Activated naive CD4-positive, alpha-beta T cell treated with anti-CD3 and anti-CD28 coated beads for 36 hours (primary cell): ENCODE measurements at regions of chr10 and their contacts with region 1.

Region 1: DNA sequence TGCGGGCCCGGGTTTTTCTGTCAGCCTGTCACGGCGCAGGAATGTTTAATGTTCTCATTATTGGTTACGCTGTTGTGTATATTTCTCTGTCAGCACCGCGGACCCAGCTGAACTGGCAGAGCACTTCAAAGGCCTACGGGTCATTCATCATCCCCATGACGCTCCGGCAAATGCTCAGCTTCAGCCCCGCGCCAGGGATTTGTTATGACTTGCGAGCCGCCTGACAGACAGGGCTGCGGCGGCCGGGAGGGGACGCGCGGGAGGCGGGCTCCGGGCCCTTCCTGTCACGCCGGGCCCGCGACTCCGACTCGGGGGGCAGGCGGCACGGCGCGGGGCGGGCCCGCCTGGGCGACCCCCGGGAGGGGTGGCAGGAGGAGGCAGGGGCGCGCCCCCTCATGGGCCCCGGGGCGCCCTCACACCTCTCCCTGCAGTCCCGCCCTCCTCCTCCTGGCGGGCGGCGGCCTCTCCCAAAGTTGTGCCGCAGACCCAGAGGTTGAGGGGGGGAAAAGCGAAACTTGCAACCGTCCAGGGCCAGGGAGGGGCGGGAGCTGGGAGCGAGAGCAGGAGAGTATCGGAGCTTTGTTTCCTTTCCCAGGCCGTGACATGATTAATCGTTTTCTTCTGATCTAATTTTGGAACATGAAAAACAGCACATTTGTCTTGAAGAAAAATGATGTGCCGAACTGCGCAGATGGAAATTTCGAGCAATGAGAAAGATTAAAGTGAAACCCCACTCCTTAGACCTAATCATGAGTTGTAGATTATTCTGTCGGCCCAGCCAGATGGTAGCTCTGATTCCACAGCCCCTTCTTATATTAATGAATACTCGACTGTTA is 59.3 kb upstream of the COMTD1 start:
- DNase-seq: peak; percentile 93
- H3K4me3 Mint-ChIP-seq: peak overlapping the region; percentile 57
- H3K27ac Mint-ChIP-seq: no peak overlapping the region
- H3K4me1 Mint-ChIP-seq: peaks cover 5% of the 10 kb centered on the region
- H3K27me3 Mint-ChIP-seq: peaks cover 4% of the 10 kb centered on the region

Region 2: DNA sequence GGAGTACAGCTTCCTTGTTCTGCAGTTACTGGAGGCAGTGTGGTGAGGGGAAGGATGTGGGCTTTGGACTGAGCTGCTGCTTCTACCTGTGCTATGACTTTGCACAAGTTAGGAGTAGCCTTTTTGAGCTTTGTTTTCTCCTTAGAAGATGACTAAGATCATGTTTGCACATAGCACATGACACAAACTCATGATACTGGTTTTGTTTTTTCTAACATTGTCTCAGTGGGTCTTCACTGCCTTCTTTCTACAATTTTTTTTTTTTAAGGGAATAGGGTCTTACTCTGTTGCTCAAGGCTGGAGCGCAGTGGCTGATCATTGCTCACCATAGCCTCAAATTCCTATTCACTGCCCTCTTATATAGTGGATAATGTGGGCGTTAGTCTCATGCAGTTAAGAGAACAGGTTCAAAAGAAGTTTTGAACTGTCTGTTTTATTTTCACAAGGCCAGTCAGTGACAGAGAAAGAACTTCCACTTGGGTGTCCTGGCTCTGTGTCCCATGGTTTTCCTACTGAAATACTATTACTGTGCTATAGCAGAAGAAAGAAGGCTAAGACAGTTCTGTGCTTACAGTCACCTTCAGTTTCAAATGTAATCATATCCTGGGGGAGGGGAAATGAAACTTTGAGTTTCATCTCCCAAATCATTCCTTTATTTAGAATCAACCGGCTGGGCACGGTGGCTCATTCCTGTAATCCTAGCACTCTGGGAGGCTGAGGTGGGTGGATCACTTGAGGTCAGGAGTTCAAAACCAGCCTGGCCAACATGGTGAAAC is 396.7 kb before region 1 on chr10:
- CTCF ChIA-PET with region 1: no interaction called
- intact Hi-C with region 1: loop called (anchors 5 kb)
- DNase-seq: peak; percentile 70
- H3K4me3 Mint-ChIP-seq: no peak overlapping the region
- H3K27ac Mint-ChIP-seq: peak overlapping the region; percentile 46
- H3K4me1 Mint-ChIP-seq: peaks cover 57% of the 10 kb centered on the region
- H3K27me3 Mint-ChIP-seq: no peaks in the 10 kb centered on the region

Region 3: DNA sequence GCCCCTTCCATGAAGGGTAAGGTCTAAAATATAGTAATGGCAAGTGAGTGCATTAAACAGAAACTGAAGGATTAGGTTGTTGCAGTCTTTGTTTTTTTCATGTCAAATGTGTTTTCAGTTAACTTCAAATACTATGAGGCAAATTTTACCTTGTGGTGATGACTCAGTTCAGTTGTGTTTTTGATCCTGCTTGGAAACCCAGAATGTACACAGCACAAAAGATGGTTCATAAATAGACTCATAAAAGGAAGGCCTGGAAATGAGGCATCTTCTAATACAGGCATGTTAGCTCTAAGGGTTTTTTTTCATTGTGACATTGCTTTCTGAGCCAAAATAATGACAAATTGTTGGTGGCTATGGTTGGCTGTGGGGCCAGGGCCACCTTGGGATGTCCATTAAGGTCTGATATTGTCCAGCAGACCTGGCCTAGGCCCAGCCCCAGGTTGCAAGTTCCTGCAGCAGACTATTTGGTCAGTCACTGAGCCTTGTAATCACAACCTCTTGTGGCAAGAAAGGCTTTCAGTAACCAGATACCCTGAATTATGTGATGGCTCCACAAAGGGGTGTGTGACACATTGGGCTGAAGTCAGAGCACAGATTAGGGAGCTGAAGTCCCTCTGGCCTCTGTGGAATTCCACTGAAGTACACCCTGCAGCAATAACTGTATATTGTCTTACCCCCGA is 252.7 kb before region 1 on chr10:
- CTCF ChIA-PET with region 1: no interaction called
- intact Hi-C with region 1: loop called (anchors 1 kb)
- DNase-seq: peak; percentile 30
- H3K4me3 Mint-ChIP-seq: peak overlapping the region; percentile 20
- H3K27ac Mint-ChIP-seq: peak overlapping the region; percentile 87
- H3K4me1 Mint-ChIP-seq: peaks cover 45% of the 10 kb centered on the region
- H3K27me3 Mint-ChIP-seq: peaks cover 7% of the 10 kb centered on the region

Region 4: DNA sequence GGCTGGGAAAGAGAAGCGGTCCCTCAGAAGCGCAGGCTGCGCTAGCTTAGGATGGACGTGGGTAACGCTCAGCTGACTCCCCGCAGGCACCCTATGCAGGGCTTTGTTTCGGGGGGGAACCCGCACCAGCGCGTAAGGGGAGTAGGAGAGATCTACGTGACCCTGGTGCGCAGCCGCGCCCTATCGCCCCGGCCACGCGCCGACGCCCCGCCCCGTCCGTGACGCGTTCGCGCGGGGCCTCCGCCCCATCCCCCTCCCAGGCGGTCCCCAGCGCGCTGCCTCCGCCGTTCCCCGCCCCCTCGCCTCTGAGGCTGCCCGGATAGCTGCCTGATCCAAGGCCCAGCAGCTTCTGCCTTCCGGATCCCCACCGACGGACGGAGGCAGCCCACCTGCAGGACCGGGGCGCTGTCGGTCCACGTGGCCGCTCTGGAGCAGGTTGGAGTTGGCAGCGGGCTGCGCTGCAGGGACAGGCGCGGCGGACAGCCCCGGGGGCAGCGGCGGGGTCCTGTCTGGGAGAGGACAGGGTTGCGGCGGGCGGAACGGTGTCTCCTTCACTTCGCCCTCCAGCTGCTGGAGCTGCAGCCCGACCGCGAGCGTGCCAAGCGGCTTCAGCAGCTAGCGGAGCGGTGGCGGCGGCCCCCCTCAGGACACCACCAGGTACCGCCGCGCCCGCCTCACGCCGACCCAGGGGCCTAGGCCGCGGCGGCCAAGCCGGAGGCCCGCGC is 84.6 kb before region 1 on chr10 and contains the start of gene VDAC2:
- CTCF ChIA-PET with region 1: no interaction called
- intact Hi-C with region 1: loop called (anchors 1 kb)
- DNase-seq: peak; percentile 92
- H3K4me3 Mint-ChIP-seq: peak within 1 kb of the TSS; percentile 100
- H3K27ac Mint-ChIP-seq: peak within 1 kb of the TSS; percentile 99
- H3K4me1 Mint-ChIP-seq: peaks cover 42% of the 10 kb centered on the region
- H3K27me3 Mint-ChIP-seq: no peaks in the 10 kb centered on the region
- total RNA-seq, gene VDAC2: 193 TPM

Region 5: GRCh38 chr10:75250910-75251309 is 44.2 kb before region 1 on chr10:
- CTCF ChIA-PET with region 1: no interaction called
- intact Hi-C with region 1: no loop called
- DNase-seq: no peak
- H3K4me3 Mint-ChIP-seq: no peak overlapping the region
- H3K27ac Mint-ChIP-seq: no peak overlapping the region
- H3K4me1 Mint-ChIP-seq: no peaks in the 10 kb centered on the region
- H3K27me3 Mint-ChIP-seq: no peaks in the 10 kb centered on the region

Region 6: DNA sequence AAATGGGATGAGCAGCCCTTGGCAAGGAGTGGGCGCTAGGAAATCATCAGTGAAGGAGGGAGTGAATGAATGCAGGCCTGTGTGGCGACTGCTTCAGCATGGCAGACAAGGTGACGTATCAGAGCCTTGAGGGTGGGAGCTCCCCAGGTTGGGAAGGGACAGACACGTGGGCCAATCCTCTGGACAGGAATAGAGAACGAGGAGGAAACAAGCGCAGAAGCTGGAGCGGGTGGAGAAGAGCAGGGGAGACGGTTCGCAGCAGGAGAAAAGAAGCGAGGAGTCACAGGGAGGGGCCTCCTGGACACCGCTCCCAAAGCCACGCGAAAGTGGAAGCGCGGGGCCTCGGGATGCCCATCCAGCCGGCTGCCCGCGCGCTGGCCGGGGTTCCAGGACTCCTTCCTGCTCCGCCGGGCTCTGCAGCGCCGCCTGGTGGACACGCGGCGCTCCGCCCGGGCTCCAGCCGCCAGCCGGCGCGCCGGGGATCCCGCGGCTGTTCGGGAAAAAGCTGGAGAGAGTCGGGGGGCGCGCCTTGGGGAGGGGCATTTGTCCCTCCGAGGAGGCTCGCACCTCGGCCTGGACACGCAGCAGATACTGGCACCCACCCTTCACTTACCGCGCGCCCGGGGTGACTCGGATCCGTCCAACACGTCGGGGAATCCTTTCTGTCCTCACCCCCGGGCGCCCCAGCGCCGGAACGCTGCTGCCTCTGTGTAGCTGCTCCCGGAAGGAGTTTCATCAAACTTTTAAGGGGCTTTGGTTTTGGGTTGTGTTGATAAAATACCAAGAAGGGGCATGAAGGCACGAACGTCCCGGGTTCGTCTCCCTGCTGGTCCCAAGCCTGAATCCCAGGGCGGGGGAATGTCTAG is 100.2 kb after region 1 on chr10:
- CTCF ChIA-PET with region 1: interaction called, 4 read pairs
- intact Hi-C with region 1: loop called (anchors 2 kb)
- DNase-seq: peak; percentile 30
- H3K4me3 Mint-ChIP-seq: no peak overlapping the region
- H3K27ac Mint-ChIP-seq: no peak overlapping the region
- H3K4me1 Mint-ChIP-seq: peaks cover 8% of the 10 kb centered on the region
- H3K27me3 Mint-ChIP-seq: peaks cover 39% of the 10 kb centered on the region

Region 7: DNA sequence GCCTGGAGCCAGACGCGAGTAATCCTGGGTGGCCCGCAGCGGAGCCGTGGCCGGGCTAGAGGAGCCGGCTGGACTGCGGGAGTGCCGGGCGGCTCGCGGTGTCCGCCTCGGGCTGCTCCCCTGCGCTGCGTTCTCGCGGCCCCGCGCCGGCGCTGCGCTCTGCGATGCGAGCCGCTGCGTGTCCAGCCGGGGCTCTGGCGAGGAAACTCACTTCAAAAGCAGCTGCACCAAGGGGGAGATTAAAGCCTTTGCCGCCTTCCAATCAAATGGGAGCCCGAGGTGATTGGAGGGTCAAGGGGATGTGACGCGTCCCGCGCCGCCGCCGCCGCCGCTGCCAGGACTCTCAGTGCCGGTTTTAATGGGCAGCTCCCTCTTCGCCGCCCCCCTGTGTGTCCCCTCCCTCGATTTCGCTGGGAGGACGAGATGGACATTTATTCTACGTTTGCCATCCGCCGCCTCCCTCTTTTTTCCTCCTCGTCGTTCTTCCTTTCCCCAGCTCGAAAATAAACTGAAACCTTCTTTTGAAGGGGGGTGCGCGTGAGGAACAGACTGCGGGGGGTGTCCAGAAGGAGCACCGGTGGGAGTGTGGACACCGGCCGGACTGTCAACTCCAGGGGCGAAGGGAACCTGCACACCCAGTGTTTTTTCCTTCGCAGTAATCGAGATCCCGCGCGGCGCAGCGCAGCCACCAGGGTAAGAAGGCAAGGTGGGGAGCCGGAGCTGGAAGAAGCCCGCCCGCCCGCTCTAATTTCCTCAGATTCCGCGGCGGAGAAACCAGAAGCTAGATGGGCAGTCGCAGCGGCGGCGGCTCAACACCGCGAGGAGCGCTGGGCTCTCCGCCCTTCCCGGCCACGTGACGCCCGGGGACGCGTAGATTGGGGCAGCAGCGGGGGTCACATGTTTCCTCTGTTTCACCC is 106.7 kb after region 1 on chr10 and contains the start of gene ZNF503:
- CTCF ChIA-PET with region 1: no interaction called
- intact Hi-C with region 1: loop called (anchors 2 kb)
- DNase-seq: peak; percentile 67
- H3K4me3 Mint-ChIP-seq: peak within 1 kb of the TSS; percentile 77
- H3K27ac Mint-ChIP-seq: no peak within 1 kb of the TSS
- H3K4me1 Mint-ChIP-seq: peaks cover 25% of the 10 kb centered on the region
- H3K27me3 Mint-ChIP-seq: peaks cover 59% of the 10 kb centered on the region
- total RNA-seq, gene ZNF503: 0.07 to 0.21 TPM

Region 8: DNA sequence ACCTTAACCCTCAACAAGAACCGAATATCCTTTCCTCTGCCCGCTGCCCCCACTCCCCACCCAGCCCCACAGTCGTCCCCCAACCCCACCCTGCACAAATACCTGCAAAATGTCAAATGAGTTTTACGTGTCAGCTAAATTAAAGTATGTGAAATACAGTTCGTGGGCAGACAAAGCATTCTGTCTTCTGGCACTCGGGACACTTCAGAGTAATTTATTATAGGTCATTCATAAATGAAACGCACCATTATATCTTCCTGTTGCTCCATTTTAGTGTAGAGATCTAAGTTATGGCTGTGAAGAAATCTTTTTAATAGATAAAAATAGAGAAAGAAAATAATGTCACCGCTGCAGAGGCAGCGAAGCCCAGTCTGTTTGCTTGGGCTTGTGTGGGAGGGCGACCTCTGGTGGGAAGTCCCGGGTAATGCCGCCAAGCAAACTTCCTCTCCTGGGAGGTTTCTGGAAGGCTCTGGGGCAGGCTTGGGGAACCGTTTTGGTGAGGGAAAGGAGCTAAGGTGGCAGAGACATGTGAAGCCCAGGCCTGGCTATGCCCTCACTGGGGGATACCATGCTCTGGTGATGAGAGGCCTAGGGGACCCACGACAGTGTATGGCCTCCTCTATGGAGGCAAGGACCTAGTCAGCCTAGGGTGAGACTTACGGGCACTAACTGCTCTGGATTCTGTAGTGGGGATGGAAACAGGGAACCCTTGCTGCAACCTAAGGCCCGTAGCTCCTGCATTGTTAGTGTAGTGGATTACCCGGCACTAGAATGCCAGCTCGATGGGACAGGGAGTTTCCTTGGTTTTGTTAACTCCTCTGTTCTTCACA is 741.2 kb after region 1 on chr10:
- CTCF ChIA-PET with region 1: no interaction called
- intact Hi-C with region 1: loop called (anchors 5 kb)
- DNase-seq: peak; percentile 64
- H3K4me3 Mint-ChIP-seq: no peak overlapping the region
- H3K27ac Mint-ChIP-seq: no peak overlapping the region
- H3K4me1 Mint-ChIP-seq: no peaks in the 10 kb centered on the region
- H3K27me3 Mint-ChIP-seq: peaks cover 2% of the 10 kb centered on the region